ENCODE measurements at regions of chr1 and their contacts with region 1.

Region 1: DNA sequence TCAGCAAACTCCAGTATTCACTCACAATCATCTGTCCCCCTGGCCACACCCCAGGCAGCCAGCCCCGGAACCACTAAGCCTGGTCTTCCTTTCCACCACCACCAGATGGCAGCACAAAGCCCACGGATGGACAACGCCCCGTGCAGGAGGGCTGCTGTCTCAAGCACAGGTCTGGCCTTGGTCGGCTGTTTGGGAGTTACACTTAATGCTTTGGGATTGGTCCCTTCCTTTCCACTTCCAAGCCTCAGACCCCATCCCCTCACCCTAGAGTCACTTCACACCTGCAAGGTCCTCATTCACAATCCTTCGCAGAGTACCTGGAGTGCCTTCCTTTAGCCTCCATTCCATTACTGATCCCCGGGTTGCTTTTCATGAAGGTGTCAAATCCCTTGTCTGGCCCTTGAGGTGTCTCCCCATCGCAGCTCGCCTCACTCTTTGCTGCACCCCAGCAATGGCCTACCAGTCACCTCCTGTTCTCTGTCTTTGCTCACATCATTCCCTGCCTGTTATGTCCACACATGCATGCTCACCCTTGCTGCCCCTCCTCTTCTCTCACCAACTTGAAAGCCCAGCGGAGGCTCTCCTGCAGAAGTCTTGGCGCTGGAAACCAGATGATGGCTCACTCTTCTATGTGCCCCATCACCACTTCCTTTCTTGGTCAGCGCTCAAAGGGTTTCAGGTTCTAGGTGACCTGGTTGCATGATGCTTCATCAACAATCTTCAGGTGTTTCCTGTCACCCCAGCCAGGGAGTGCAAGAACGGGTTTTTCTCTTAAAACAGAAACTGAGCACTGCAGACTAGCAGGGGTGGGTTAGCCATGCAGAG is 24.9 kb upstream of the KCNA2 start:
- DNase-seq: peak; percentile 66 to 94 (median 85)
- ATAC-seq: peak; percentile 72
- H3K4me3 ChIP-seq: peak overlapping the region; percentile 27
- H3K4me3 Mint-ChIP-seq: no peak overlapping the region
- H3K27ac ChIP-seq: peak overlapping the region; percentile 28 to 55
- H3K27ac Mint-ChIP-seq: no peak overlapping the region
- H3K4me1 ChIP-seq: peaks cover 55% of the 10 kb centered on the region
- H3K4me1 Mint-ChIP-seq: peaks cover 46% of the 10 kb centered on the region
- H3K27me3 ChIP-seq: no peaks in the 10 kb centered on the region
- H3K27me3 Mint-ChIP-seq: no peaks in the 10 kb centered on the region
- CTCF ChIP-seq: peak; percentile 70

Region 2: DNA sequence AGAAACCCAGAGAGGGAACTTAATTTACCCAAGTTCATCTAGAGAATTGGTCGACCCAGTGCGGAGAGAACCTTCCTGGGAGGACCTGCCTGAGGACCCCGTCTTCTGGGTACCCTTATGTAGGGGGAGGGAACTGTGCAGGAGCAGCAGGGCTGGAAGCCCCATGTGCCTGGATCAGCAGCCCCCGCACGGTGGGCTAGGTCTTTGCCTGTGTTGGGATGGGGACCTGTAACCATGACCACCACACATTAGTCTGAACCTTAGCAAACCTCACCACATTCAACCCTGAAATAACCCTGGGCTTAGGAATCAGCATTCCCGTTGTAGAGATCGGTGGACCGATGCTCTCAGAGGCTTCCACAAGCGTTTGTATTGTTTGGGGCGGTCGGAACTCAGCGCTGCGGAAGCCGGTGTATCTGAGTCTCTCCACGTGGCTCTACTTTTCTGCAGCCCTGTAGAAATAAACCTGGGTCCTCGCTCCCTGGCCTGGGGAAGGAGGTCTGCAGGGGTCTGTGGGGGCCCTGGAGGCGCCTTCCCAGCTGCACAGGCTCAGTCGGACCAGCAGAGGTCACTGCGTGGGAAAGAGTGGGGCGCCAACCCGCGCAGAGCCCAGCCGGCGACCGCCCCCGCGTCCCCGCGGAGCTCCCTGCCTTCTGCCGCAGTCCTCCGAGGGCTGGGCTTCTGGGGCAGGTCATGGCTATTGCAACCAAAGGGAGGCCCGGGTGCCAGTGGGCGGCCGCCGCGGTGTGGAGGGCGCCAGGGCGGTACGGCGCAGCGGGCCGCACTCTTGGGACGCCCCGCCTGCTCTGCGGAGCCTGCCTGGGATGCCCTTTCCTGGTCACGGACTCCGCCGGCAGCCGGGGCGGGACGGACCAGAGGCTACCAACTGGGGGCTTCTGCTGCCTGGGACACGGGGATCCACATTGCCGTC is 75.9 kb before region 1 on chr1:
- CTCF ChIA-PET with region 1: no interaction called
- POLR2A ChIA-PET with region 1: no interaction called
- intact Hi-C with region 1: no loop called
- DNase-seq: peak; percentile 24 to 75 (median 57)
- ATAC-seq: peak; percentile 97
- H3K4me3 ChIP-seq: peak overlapping the region in 1 of 2 experiments; percentile 23
- H3K4me3 Mint-ChIP-seq: peak overlapping the region; percentile 27
- H3K27ac ChIP-seq: no peak overlapping the region
- H3K27ac Mint-ChIP-seq: no peak overlapping the region
- H3K4me1 ChIP-seq: peaks cover 5% of the 10 kb centered on the region
- H3K4me1 Mint-ChIP-seq: peaks cover 4% of the 10 kb centered on the region
- H3K27me3 ChIP-seq: no peaks in the 10 kb centered on the region
- H3K27me3 Mint-ChIP-seq: peaks cover 44% of the 10 kb centered on the region
- CTCF ChIP-seq: peak; percentile 58

Region 3: GRCh38 chr1:110645821-110646735 is 15.0 kb after region 1 on chr1:
- CTCF ChIA-PET with region 1: interaction called, 46 read pairs
- POLR2A ChIA-PET with region 1: interaction called, 60 read pairs
- intact Hi-C with region 1: loop called (anchors 2 kb)
- DNase-seq: peak in 2 of 9 experiments; percentile 27 to 53
- ATAC-seq: peak; percentile 28
- H3K4me3 ChIP-seq: no peak overlapping the region
- H3K4me3 Mint-ChIP-seq: no peak overlapping the region
- H3K27ac ChIP-seq: peak overlapping the region in 1 of 2 experiments; percentile 70
- H3K27ac Mint-ChIP-seq: peak overlapping the region; percentile 28
- H3K4me1 ChIP-seq: peaks cover 77% of the 10 kb centered on the region
- H3K4me1 Mint-ChIP-seq: peaks cover 43% of the 10 kb centered on the region
- H3K27me3 ChIP-seq: no peaks in the 10 kb centered on the region
- H3K27me3 Mint-ChIP-seq: no peaks in the 10 kb centered on the region
- CTCF ChIP-seq: no peak

Region 4: GRCh38 chr1:110686188-110686587 is 55.1 kb after region 1 on chr1:
- CTCF ChIA-PET with region 1: interaction called, 14 read pairs
- POLR2A ChIA-PET with region 1: no interaction called
- intact Hi-C with region 1: loop called (anchors 1 kb)
- DNase-seq: peak in 7 of 9 experiments; percentile 10 to 65 (median 36)
- ATAC-seq: peak; percentile 84
- H3K4me3 ChIP-seq: no peak overlapping the region
- H3K4me3 Mint-ChIP-seq: no peak overlapping the region
- H3K27ac ChIP-seq: no peak overlapping the region
- H3K27ac Mint-ChIP-seq: no peak overlapping the region
- H3K4me1 ChIP-seq: no peaks in the 10 kb centered on the region
- H3K4me1 Mint-ChIP-seq: peaks cover 4% of the 10 kb centered on the region
- H3K27me3 ChIP-seq: no peaks in the 10 kb centered on the region
- H3K27me3 Mint-ChIP-seq: no peaks in the 10 kb centered on the region
- CTCF ChIP-seq: peak; percentile 34

Measured in CD8-positive, alpha-beta T cell (primary cell).